IMR-90 (cell line): ENCODE measurements at regions of chr20 and their contacts with region 1.

Region 1: GRCh38 chr20:55488593-55488992 is 516.7 kb downstream of the CBLN4 start:
- DNase-seq: no peak
- ATAC-seq: no peak
- H3K4me3 ChIP-seq: no peak overlapping the region
- H3K27ac ChIP-seq: no peak overlapping the region
- H3K4me1 ChIP-seq: no peaks in the 10 kb centered on the region
- H3K27me3 ChIP-seq: no peaks in the 10 kb centered on the region
- CTCF ChIP-seq: no peak
- POLR2A ChIP-seq: no peak
- RAD21 ChIP-seq: no peak

Region 2: DNA sequence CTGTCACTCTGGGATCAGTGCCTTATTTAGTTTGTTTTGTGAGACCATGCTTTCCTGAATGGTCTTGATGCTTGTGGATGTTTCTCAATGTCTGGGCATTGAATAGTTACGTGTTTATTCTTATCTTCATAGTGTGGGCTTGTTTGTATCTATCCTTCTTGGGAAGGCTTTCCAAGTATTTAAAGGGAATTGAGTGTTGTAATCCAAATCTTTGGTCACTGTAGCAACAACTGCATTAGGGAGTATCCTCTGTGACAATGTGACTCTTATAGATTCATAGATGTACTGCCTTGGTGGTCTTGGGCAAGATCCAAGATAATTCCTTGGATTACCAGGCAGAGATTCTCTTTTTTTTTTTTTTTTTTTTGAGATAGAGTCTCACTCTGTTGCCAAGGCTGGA is 81.7 kb before region 1 on chr20:
- CTCF ChIA-PET with region 1: no interaction called
- POLR2A ChIA-PET with region 1: no interaction called
- dilution Hi-C with region 1: no loop called
- in situ Hi-C with region 1: no loop called
- intact Hi-C with region 1: no loop called
- DNase-seq: no peak
- ATAC-seq: no peak
- H3K4me3 ChIP-seq: no peak overlapping the region
- H3K27ac ChIP-seq: no peak overlapping the region
- H3K4me1 ChIP-seq: no peaks in the 10 kb centered on the region
- H3K27me3 ChIP-seq: no peaks in the 10 kb centered on the region
- CTCF ChIP-seq: no peak
- POLR2A ChIP-seq: no peak
- RAD21 ChIP-seq: no peak

Region 3: GRCh38 chr20:55471052-55472006 is 17.3 kb before region 1 on chr20:
- CTCF ChIA-PET with region 1: interaction called, 11 read pairs
- POLR2A ChIA-PET with region 1: no interaction called
- dilution Hi-C with region 1: no loop called
- in situ Hi-C with region 1: no loop called
- intact Hi-C with region 1: no loop called
- DNase-seq: no peak
- ATAC-seq: no peak
- H3K4me3 ChIP-seq: no peak overlapping the region
- H3K27ac ChIP-seq: no peak overlapping the region
- H3K4me1 ChIP-seq: no peaks in the 10 kb centered on the region
- H3K27me3 ChIP-seq: no peaks in the 10 kb centered on the region
- CTCF ChIP-seq: no peak
- POLR2A ChIP-seq: no peak
- RAD21 ChIP-seq: no peak